ENCODE measurements at regions of chr2 and their contacts with region 1.

Region 1: GRCh38 chr2:216034065-216034464 is 20.7 kb upstream of the MREG start:
- DNase-seq: peak; percentile 61 to 72 (median 67)
- H3K4me3 ChIP-seq: no peak overlapping the region
- H3K4me3 Mint-ChIP-seq: no peak overlapping the region
- H3K27ac ChIP-seq: no peak overlapping the region
- H3K27ac Mint-ChIP-seq: peak overlapping the region in 2 of 7 donors; percentile 5 to 66
- H3K4me1 ChIP-seq: no peaks in the 10 kb centered on the region
- H3K4me1 Mint-ChIP-seq: peaks cover 5 to 10% (median 7%) of the 10 kb centered on the region in 4 donors
- H3K27me3 ChIP-seq: no peaks in the 10 kb centered on the region
- H3K27me3 Mint-ChIP-seq: no peaks in the 10 kb centered on the region

Region 2: GRCh38 chr2:215498431-215498830 is 535.6 kb before region 1 on chr2:
- CTCF ChIA-PET with region 1: no interaction called
- POLR2A ChIA-PET with region 1: no interaction called
- intact Hi-C with region 1: no loop called
- DNase-seq: no peak
- H3K4me3 ChIP-seq: no peak overlapping the region
- H3K4me3 Mint-ChIP-seq: no peak overlapping the region
- H3K27ac ChIP-seq: no peak overlapping the region
- H3K27ac Mint-ChIP-seq: no peak overlapping the region
- H3K4me1 ChIP-seq: no peaks in the 10 kb centered on the region
- H3K4me1 Mint-ChIP-seq: no peaks in the 10 kb centered on the region
- H3K27me3 ChIP-seq: no peaks in the 10 kb centered on the region
- H3K27me3 Mint-ChIP-seq: peaks cover 5 to 8% of the 10 kb centered on the region in 2 donors

Region 3: DNA sequence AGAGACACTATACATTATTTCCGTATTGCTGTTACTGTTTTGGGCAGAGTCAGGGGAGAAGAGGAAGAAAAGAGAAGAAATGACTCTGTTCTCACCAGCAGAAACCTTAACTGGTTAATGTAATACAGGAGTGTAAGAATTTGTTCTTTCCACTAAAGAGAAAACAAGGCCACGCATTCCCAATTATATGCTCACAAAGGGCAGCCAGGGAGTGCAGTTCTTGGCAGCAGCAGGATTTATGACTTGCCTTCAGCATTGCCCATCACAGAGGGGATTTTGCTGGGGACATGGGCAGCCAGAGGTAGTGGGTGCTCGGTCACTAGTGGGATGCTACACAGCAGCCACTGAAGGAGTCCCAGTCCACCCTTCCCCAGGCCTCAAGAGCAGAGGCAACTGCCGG is 39.2 kb before region 1 on chr2:
- CTCF ChIA-PET with region 1: no interaction called
- POLR2A ChIA-PET with region 1: no interaction called
- intact Hi-C with region 1: no loop called
- DNase-seq: no peak
- H3K4me3 ChIP-seq: no peak overlapping the region
- H3K4me3 Mint-ChIP-seq: no peak overlapping the region
- H3K27ac ChIP-seq: no peak overlapping the region
- H3K27ac Mint-ChIP-seq: no peak overlapping the region
- H3K4me1 ChIP-seq: peaks cover 7% of the 10 kb centered on the region
- H3K4me1 Mint-ChIP-seq: peaks cover 4 to 9% (median 6%) of the 10 kb centered on the region in 4 donors
- H3K27me3 ChIP-seq: no peaks in the 10 kb centered on the region
- H3K27me3 Mint-ChIP-seq: no peaks in the 10 kb centered on the region

Region 4: DNA sequence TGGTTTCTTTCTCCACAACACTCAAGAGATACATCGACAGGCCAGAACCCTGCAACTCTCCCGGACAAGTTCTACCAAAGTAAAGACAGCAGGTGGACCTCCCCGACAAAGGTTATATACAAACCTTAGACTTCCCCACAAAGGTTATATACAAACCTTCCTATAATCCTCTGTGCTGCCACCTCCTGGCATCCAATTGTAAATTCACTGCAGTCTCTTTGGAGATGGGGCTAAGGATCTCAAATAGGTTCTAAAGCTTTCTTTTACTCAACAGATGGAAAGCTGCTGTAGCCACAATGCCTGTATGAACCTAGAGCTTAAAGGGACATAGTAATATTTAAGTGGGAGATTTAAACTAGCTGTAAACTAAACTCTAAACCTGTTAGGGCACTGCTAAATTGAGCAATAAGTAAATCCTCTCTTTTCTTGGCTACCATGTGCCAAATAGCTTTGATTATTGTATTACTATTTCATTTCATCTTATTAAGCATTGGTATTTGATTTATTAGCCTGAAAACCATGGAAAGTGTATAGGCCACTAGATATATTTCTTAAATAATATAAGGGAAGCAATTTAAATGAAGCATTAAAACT is 10.9 kb before region 1 on chr2:
- CTCF ChIA-PET with region 1: interaction called, 68 read pairs
- POLR2A ChIA-PET with region 1: interaction called, 3 read pairs
- intact Hi-C with region 1: no loop called
- DNase-seq: peak; percentile 13 to 51 (median 28)
- H3K4me3 ChIP-seq: no peak overlapping the region
- H3K4me3 Mint-ChIP-seq: no peak overlapping the region
- H3K27ac ChIP-seq: no peak overlapping the region
- H3K27ac Mint-ChIP-seq: peak overlapping the region in 1 of 7 donors; percentile 57
- H3K4me1 ChIP-seq: no peaks in the 10 kb centered on the region
- H3K4me1 Mint-ChIP-seq: peaks cover 0 to 6% (median 3%) of the 10 kb centered on the region in 4 donors
- H3K27me3 ChIP-seq: no peaks in the 10 kb centered on the region
- H3K27me3 Mint-ChIP-seq: no peaks in the 10 kb centered on the region

Region 5: GRCh38 chr2:216057688-216058193 is 23.7 kb after region 1 on chr2:
- CTCF ChIA-PET with region 1: interaction called, 45 read pairs
- POLR2A ChIA-PET with region 1: no interaction called
- intact Hi-C with region 1: no loop called
- DNase-seq: peak; percentile 62 to 73 (median 65)
- H3K4me3 ChIP-seq: peak overlapping the region in 1 of 2 donors; percentile 14
- H3K4me3 Mint-ChIP-seq: peak overlapping the region; percentile 75 to 93 (median 85)
- H3K27ac ChIP-seq: peak overlapping the region; percentile 61
- H3K27ac Mint-ChIP-seq: peak overlapping the region; percentile 98 to 99 (median 99)
- H3K4me1 ChIP-seq: peaks cover 23% of the 10 kb centered on the region
- H3K4me1 Mint-ChIP-seq: peaks cover 21 to 41% (median 27%) of the 10 kb centered on the region in 4 donors
- H3K27me3 ChIP-seq: no peaks in the 10 kb centered on the region
- H3K27me3 Mint-ChIP-seq: no peaks in the 10 kb centered on the region

Region 6: DNA sequence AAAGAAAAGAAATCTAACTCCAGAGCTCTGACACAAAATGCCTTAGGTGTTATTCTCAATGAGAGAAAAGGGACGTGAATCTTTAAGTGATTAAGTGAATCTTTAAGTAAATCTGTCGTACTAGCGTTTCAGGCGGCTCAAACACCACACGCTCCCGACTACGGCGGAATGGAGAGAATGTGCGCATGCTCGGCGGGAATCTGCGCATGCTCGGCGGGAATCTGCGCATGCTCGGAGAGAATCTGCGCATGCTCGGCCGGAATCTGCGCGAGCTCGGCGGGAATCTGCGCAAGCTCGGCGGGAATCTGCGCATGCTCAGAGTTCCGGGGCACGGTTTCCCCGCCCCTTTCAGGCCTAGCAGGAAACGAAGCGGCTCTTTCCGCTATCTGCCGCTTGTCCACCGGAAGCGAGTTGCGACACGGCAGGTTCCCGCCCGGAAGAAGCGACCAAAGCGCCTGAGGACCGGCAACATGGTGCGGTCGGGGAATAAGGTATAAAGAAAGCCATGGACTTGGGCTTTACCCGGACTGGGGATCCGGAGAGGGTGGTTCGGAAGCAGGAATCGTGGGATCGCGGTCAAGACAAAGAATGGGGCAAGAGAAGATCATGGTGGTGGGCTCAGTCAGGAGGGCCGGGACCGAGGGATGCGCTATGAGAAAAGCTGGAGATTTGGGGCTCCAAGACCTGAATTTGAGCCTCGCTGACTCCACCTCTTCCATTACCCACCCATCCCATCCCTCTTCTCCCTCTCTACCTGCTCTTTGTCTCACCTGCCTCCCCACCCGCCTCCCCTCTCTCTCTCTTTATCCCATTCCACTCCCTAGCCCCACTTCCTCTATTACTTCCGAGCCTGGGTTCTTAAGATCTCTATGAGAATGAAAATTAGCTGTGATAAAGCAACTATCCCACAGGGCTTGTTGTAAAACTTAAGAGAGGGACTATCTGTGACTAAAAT is 75.2 kb after region 1 on chr2 and contains the start of gene XRCC5:
- CTCF ChIA-PET with region 1: interaction called, 20 read pairs
- POLR2A ChIA-PET with region 1: interaction called, 7 read pairs
- intact Hi-C with region 1: loop called (anchors 10 kb)
- DNase-seq: peak; percentile 95 to 98 (median 96)
- H3K4me3 ChIP-seq: peak within 1 kb of the TSS; percentile 94 to 95
- H3K4me3 Mint-ChIP-seq: peak within 1 kb of the TSS; percentile 99 to 100 (median 100)
- H3K27ac ChIP-seq: peak within 1 kb of the TSS; percentile 98
- H3K27ac Mint-ChIP-seq: peak within 1 kb of the TSS; percentile 99 to 100 (median 100)
- H3K4me1 ChIP-seq: peaks cover 51% of the 10 kb centered on the region
- H3K4me1 Mint-ChIP-seq: peaks cover 36 to 61% (median 49%) of the 10 kb centered on the region in 4 donors
- H3K27me3 ChIP-seq: no peaks in the 10 kb centered on the region
- H3K27me3 Mint-ChIP-seq: peaks cover 2 to 3% of the 10 kb centered on the region in 2 donors
- total RNA-seq, gene XRCC5: 235 to 240 TPM

Region 7: GRCh38 chr2:216139884-216140283 is 105.8 kb after region 1 on chr2:
- CTCF ChIA-PET with region 1: interaction called, 40 read pairs
- POLR2A ChIA-PET with region 1: no interaction called
- intact Hi-C with region 1: loop called (anchors 1 kb)
- DNase-seq: peak; percentile 30 to 58 (median 39)
- H3K4me3 ChIP-seq: no peak overlapping the region
- H3K4me3 Mint-ChIP-seq: no peak overlapping the region
- H3K27ac ChIP-seq: no peak overlapping the region
- H3K27ac Mint-ChIP-seq: peak overlapping the region in 3 of 7 donors; percentile 56 to 73 (median 57)
- H3K4me1 ChIP-seq: no peaks in the 10 kb centered on the region
- H3K4me1 Mint-ChIP-seq: peaks cover 0 to 17% (median 14%) of the 10 kb centered on the region in 4 donors
- H3K27me3 ChIP-seq: no peaks in the 10 kb centered on the region
- H3K27me3 Mint-ChIP-seq: no peaks in the 10 kb centered on the region

Region 8: GRCh38 chr2:216206041-216206703 is 172.1 kb after region 1 on chr2:
- CTCF ChIA-PET with region 1: no interaction called
- POLR2A ChIA-PET with region 1: no interaction called
- intact Hi-C with region 1: no loop called
- DNase-seq: no peak
- H3K4me3 ChIP-seq: no peak overlapping the region
- H3K4me3 Mint-ChIP-seq: no peak overlapping the region
- H3K27ac ChIP-seq: no peak overlapping the region
- H3K27ac Mint-ChIP-seq: peak overlapping the region in 4 of 7 donors; percentile 52 to 79 (median 62)
- H3K4me1 ChIP-seq: no peaks in the 10 kb centered on the region
- H3K4me1 Mint-ChIP-seq: peaks cover 12 to 19% (median 16%) of the 10 kb centered on the region in 4 donors
- H3K27me3 ChIP-seq: no peaks in the 10 kb centered on the region
- H3K27me3 Mint-ChIP-seq: no peaks in the 10 kb centered on the region

Measured in CD4-positive, alpha-beta memory T cell (primary cell).